ENCODE measurements at regions of chr10 and their contacts with region 1.

Region 1: GRCh38 chr10:98467506-98468346 is 21.0 kb upstream of the HPS1 start:
- DNase-seq: peak; percentile 87
- CTCF ChIP-seq: peak; percentile 89

Region 2: DNA sequence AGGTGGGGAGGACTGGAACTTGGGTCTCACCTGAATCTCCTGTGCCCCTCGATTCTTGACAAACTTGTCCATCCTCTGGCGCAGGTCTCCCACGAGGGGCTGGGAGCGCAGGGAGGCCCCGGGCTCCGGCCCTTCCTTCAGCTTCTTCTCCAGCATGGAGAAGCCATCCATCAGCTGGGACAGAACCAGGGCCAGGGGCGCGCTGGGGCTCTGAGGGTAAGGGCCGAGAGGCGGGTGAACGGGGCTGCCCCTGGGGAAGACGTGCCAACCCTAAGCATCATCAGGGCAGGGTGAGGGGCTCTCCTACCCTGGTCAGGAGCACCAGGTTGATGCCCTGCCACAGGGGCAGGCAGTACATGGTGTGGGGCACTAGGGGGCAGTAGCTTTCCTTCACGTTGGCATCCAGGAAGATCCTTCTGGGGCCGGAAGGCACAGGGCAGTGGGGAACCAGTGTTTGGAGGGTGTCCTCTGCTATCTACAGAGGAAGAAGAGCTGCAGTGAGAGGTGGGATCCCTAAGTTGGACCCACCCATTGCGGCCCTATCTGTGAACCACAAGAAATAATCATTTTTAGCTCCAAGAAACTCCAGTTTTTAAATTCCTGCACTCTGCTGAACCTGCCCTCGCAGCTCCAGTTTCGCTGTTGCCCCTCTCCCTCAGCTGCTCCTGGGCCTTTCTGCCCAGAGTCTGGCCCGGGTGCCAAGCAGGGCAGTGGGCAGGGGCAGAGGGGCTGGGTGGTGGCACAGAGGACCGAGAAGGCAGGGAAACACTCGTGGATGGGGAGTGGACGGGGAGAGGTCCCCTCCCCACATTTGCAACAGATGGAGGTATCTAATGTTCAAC is 42.0 kb before region 1 on chr10:
- CTCF ChIA-PET with region 1: interaction called, 20 read pairs
- POLR2A ChIA-PET with region 1: no interaction called
- DNase-seq: peak; percentile 73
- CTCF ChIP-seq: peak; percentile 77

Region 3: GRCh38 chr10:98488669-98489426 is 21.1 kb after region 1 on chr10:
- CTCF ChIA-PET with region 1: interaction called, 10 read pairs
- POLR2A ChIA-PET with region 1: no interaction called
- DNase-seq: no peak
- CTCF ChIP-seq: no peak

Region 4: GRCh38 chr10:98525969-98526368 is 58.2 kb after region 1 on chr10:
- CTCF ChIA-PET with region 1: no interaction called
- POLR2A ChIA-PET with region 1: no interaction called
- DNase-seq: no peak
- CTCF ChIP-seq: no peak

Region 5: GRCh38 chr10:98664331-98665042 is 196.8 kb after region 1 on chr10:
- CTCF ChIA-PET with region 1: interaction called, 15 read pairs
- POLR2A ChIA-PET with region 1: no interaction called
- DNase-seq: peak; percentile 46
- CTCF ChIP-seq: peak; percentile 46

Region 6: DNA sequence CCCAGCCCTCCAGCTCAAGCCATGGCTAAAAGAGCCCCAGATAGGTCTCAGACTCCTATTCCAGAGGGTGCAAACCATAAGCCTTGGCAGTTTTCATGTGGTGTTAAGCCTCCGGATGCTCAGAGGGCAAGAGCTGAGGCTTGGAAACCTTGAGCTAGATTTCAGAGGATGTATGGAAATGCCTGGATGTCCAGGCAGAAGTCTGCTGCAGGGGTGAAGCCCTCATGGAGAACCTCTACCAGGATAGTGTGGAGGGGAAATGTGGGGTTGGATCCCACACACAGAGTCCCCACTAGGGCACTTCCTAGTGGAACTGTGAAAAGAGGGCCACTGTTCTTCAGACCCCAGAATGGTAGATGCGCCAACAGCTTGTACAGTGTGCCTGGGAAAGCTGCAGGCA is 781.1 kb after region 1 on chr10:
- CTCF ChIA-PET with region 1: interaction called, 20 read pairs
- POLR2A ChIA-PET with region 1: no interaction called
- DNase-seq: no peak
- CTCF ChIP-seq: no peak

Measured in GM10248 (cell line).